ENCODE measurements at regions of chr10 and their contacts with region 1.

Region 1: GRCh38 chr10:26737730-26738129 is 40.2 kb downstream of the PDSS1 start:
- DNase-seq: peak; percentile 60
- H3K4me3 Mint-ChIP-seq: no peak overlapping the region
- H3K27ac Mint-ChIP-seq: peak overlapping the region; percentile 90
- H3K4me1 Mint-ChIP-seq: peaks cover 67% of the 10 kb centered on the region
- H3K27me3 Mint-ChIP-seq: no peaks in the 10 kb centered on the region

Region 2: GRCh38 chr10:26755443-26755903 is 17.7 kb after region 1 on chr10:
- CTCF ChIA-PET with region 1: interaction called, 8 read pairs
- POLR2A ChIA-PET with region 1: interaction called, 13 read pairs
- DNase-seq: no peak
- H3K4me3 Mint-ChIP-seq: no peak overlapping the region
- H3K27ac Mint-ChIP-seq: peak overlapping the region; percentile 1
- H3K4me1 Mint-ChIP-seq: peaks cover 20% of the 10 kb centered on the region
- H3K27me3 Mint-ChIP-seq: no peaks in the 10 kb centered on the region